CD8-positive, alpha-beta T cell (primary cell): ENCODE measurements at regions of chr10 and their contacts with region 1.

Region 1: GRCh38 chr10:49518982-49519578 is 19.8 kb downstream of the ERCC6 start:
- DNase-seq: peak in 3 of 9 experiments; percentile 28 to 65 (median 54)
- ATAC-seq: peak; percentile 79
- H3K4me3 ChIP-seq: no peak overlapping the region
- H3K4me3 Mint-ChIP-seq: no peak overlapping the region
- H3K27ac ChIP-seq: no peak overlapping the region
- H3K27ac Mint-ChIP-seq: no peak overlapping the region
- H3K4me1 ChIP-seq: no peaks in the 10 kb centered on the region
- H3K4me1 Mint-ChIP-seq: peaks cover 5% of the 10 kb centered on the region
- H3K27me3 ChIP-seq: no peaks in the 10 kb centered on the region
- H3K27me3 Mint-ChIP-seq: no peaks in the 10 kb centered on the region
- CTCF ChIP-seq: peak; percentile 69

Region 2: DNA sequence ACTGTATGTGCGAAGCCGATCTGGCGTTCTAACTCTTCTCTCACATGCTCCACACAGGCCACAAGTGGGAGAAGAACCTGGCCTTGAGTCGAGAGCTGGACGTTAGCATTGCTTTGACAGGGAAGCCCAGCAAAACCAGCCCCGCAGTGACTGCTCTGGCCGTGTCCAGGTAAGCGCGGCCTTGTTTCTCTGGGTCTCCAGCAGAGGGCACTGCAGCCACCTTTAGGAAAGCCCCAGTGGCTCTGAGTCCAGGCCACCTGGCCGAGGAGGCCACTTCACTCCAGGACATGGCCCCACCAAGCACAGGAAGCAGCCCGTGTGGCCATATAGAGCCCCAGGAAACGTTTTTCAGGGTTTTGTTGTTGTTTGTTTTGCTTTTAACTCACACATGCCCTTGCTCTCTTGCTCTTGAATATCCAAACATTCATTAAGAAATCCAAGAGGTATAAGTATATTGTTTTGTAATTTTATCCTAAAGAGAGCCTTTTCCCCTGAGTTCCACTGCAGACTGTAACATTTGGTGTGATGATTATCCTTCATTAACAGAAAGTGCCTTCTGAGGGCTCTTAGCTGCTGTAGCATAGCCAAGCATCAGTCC is 537.7 kb before region 1 on chr10:
- CTCF ChIA-PET with region 1: no interaction called
- POLR2A ChIA-PET with region 1: no interaction called
- intact Hi-C with region 1: loop called in 1 of 2 experiments (anchors 2 kb)
- DNase-seq: peak in 6 of 9 experiments; percentile 7 to 38 (median 21)
- ATAC-seq: no peak
- H3K4me3 ChIP-seq: no peak overlapping the region
- H3K4me3 Mint-ChIP-seq: no peak overlapping the region
- H3K27ac ChIP-seq: no peak overlapping the region
- H3K27ac Mint-ChIP-seq: no peak overlapping the region
- H3K4me1 ChIP-seq: no peaks in the 10 kb centered on the region
- H3K4me1 Mint-ChIP-seq: no peaks in the 10 kb centered on the region
- H3K27me3 ChIP-seq: no peaks in the 10 kb centered on the region
- H3K27me3 Mint-ChIP-seq: no peaks in the 10 kb centered on the region
- CTCF ChIP-seq: peak; percentile 58

Region 3: DNA sequence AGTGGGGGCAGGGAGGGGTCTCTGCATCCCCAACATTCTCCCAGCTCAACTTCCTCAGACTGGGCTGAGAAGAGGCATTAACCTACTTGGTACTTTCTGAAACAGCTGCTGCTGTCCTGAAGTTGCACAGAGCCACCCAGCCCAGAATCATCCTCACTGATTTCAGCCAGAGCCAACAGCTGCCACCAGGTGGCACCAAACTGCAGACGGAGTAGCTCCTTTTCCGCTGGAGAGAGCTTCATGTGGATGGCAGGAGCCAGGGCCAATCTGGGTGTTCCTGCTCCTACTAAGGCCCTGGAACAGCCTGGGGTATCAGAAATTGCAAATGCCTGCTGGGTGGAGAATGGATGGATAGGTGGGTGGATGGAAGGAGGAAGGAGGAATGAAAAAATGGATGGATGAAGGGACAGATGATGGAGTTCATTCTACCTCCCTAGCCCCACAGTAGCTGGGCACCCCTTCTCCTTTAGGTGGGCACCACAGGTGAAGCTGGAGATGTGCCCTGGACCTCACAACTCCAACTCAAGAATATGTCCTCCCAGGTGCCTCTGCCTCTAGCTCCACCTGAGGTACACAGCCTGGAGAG is 111.4 kb before region 1 on chr10:
- CTCF ChIA-PET with region 1: interaction called, 128 read pairs
- POLR2A ChIA-PET with region 1: no interaction called
- intact Hi-C with region 1: loop called (anchors 1 kb)
- DNase-seq: peak; percentile 44 to 84 (median 71)
- ATAC-seq: peak; percentile 63
- H3K4me3 ChIP-seq: no peak overlapping the region
- H3K4me3 Mint-ChIP-seq: no peak overlapping the region
- H3K27ac ChIP-seq: no peak overlapping the region
- H3K27ac Mint-ChIP-seq: no peak overlapping the region
- H3K4me1 ChIP-seq: no peaks in the 10 kb centered on the region
- H3K4me1 Mint-ChIP-seq: no peaks in the 10 kb centered on the region
- H3K27me3 ChIP-seq: no peaks in the 10 kb centered on the region
- H3K27me3 Mint-ChIP-seq: peaks cover 58% of the 10 kb centered on the region
- CTCF ChIP-seq: peak; percentile 78

Region 4: GRCh38 chr10:49435224-49435623 is 83.9 kb before region 1 on chr10:
- CTCF ChIA-PET with region 1: no interaction called
- POLR2A ChIA-PET with region 1: no interaction called
- intact Hi-C with region 1: no loop called
- DNase-seq: no peak
- ATAC-seq: no peak
- H3K4me3 ChIP-seq: no peak overlapping the region
- H3K4me3 Mint-ChIP-seq: no peak overlapping the region
- H3K27ac ChIP-seq: no peak overlapping the region
- H3K27ac Mint-ChIP-seq: no peak overlapping the region
- H3K4me1 ChIP-seq: no peaks in the 10 kb centered on the region
- H3K4me1 Mint-ChIP-seq: no peaks in the 10 kb centered on the region
- H3K27me3 ChIP-seq: no peaks in the 10 kb centered on the region
- H3K27me3 Mint-ChIP-seq: peaks cover 7% of the 10 kb centered on the region
- CTCF ChIP-seq: no peak

Region 5: GRCh38 chr10:49532461-49532860 is 13.4 kb after region 1 on chr10:
- CTCF ChIA-PET with region 1: interaction called, 22 read pairs
- POLR2A ChIA-PET with region 1: no interaction called
- intact Hi-C with region 1: no loop called
- DNase-seq: no peak
- ATAC-seq: no peak
- H3K4me3 ChIP-seq: no peak overlapping the region
- H3K4me3 Mint-ChIP-seq: no peak overlapping the region
- H3K27ac ChIP-seq: no peak overlapping the region
- H3K27ac Mint-ChIP-seq: no peak overlapping the region
- H3K4me1 ChIP-seq: no peaks in the 10 kb centered on the region
- H3K4me1 Mint-ChIP-seq: peaks cover 41% of the 10 kb centered on the region
- H3K27me3 ChIP-seq: no peaks in the 10 kb centered on the region
- H3K27me3 Mint-ChIP-seq: no peaks in the 10 kb centered on the region
- CTCF ChIP-seq: no peak

Region 6: DNA sequence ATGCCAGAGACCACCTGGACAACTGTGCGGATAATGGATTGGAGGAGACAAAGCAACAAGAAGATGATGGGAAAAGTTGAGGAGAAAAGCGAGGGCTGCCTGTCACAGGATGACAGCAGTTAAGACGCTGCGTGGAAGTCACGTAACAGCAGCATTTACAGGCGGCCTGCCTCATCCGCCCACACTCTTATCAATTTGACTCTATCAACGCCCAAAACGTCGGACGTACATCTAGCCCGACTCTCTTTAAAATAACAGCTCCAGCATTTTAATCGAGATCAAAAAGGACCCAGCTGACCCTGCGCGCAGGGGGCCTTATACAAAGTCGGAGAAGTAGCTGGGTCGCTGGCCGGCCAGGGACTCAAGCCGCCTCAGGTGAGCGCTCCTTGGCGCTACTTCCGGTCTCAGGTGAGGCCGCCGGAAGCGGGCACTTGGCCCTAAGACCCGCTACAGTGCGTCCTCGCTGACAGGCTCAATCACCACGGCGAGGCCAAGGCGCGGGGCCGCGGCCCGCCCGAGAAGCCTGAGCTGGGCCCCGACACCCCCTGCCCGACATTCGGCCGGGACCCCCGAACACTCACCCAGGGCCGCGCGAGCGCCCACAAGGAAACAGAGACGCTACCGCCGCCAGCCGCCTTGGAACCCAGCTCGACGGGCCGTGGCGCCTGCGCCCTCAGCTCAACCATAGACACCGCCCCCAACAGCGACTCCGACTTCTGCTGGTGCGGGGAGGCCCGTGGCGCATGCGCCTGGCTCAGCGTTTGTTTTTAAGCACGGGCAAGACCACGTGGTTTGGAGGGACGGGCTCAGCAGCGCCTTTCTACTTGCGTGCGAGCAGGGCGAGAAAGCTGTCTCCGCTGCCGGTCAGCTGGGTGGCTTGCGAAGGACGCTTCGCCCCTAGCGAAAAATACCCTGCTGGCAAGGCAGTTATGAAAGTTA is 19.6 kb after region 1 on chr10 and contains the start of gene ERCC6:
- CTCF ChIA-PET with region 1: interaction called, 22 read pairs
- POLR2A ChIA-PET with region 1: no interaction called
- intact Hi-C with region 1: no loop called
- DNase-seq: peak; percentile 93 to 98 (median 96)
- ATAC-seq: peak; percentile 95
- H3K4me3 ChIP-seq: peak within 1 kb of the TSS; percentile 75 to 77
- H3K4me3 Mint-ChIP-seq: peak within 1 kb of the TSS; percentile 96
- H3K27ac ChIP-seq: peak within 1 kb of the TSS; percentile 72 to 84
- H3K27ac Mint-ChIP-seq: peak within 1 kb of the TSS; percentile 96
- H3K4me1 ChIP-seq: peaks cover 9% of the 10 kb centered on the region
- H3K4me1 Mint-ChIP-seq: peaks cover 43% of the 10 kb centered on the region
- H3K27me3 ChIP-seq: no peaks in the 10 kb centered on the region
- H3K27me3 Mint-ChIP-seq: peaks cover 13% of the 10 kb centered on the region
- CTCF ChIP-seq: no peak
- total RNA-seq, gene ERCC6: 37.2 to 38.7 TPM